Activated CD4-positive, alpha-beta T cell treated with anti-CD3 and anti-CD28 coated beads, Interleukin-2, amount 10 ng/mL, durations not matched to agents 24 days and 14 days (primary cell): ENCODE measurements at regions of chr3 and their contacts with region 1.

Region 1: GRCh38 chr3:31550452-31551251 is 17.9 kb downstream of the STT3B start:
- DNase-seq: peak; percentile 73
- H3K4me3 Mint-ChIP-seq: no peak overlapping the region
- H3K27ac Mint-ChIP-seq: peak overlapping the region; percentile 10
- H3K4me1 Mint-ChIP-seq: peaks cover 61% of the 10 kb centered on the region
- H3K27me3 Mint-ChIP-seq: no peaks in the 10 kb centered on the region

Region 2: DNA sequence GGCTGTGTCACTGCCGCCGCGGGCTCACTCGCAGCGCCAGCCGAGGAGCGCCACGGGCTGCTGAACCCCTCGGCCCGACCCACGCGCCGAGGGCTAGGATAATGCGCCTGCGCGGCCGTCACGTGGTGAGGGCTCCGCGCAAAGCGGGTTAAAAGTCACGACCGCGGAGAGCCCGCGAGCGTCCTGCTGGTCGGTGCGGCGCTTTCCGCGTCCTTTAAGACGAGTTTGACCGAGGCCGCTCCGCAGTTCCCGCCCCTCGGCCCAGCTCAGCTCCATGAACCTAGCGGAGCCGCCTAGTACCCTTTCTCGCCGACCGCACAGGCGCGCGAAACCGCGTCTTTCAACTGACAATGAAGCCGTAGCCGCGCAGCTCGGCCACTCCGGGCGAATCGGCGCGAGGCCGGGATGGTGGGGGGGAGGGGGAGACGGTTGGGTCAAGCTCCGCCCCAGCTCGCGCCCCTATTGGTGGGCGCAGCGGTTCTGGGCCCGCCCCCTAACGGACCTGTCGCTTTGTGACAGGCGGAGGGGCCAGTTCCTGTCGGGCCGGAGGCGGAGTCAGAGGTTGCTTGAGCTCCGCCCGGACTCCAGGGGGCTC is 18.6 kb before region 1 on chr3:
- intact Hi-C with region 1: no loop called
- DNase-seq: peak; percentile 100
- H3K4me3 Mint-ChIP-seq: peak overlapping the region; percentile 95
- H3K27ac Mint-ChIP-seq: peak overlapping the region; percentile 99
- H3K4me1 Mint-ChIP-seq: peaks cover 19% of the 10 kb centered on the region
- H3K27me3 Mint-ChIP-seq: no peaks in the 10 kb centered on the region

Region 3: GRCh38 chr3:31695280-31696008 is 144.8 kb after region 1 on chr3:
- intact Hi-C with region 1: loop called (anchors 5 kb)
- DNase-seq: peak; percentile 77
- H3K4me3 Mint-ChIP-seq: no peak overlapping the region
- H3K27ac Mint-ChIP-seq: no peak overlapping the region
- H3K4me1 Mint-ChIP-seq: no peaks in the 10 kb centered on the region
- H3K27me3 Mint-ChIP-seq: no peaks in the 10 kb centered on the region